ENCODE measurements at regions of chr1 and their contacts with region 1.

Region 1: DNA sequence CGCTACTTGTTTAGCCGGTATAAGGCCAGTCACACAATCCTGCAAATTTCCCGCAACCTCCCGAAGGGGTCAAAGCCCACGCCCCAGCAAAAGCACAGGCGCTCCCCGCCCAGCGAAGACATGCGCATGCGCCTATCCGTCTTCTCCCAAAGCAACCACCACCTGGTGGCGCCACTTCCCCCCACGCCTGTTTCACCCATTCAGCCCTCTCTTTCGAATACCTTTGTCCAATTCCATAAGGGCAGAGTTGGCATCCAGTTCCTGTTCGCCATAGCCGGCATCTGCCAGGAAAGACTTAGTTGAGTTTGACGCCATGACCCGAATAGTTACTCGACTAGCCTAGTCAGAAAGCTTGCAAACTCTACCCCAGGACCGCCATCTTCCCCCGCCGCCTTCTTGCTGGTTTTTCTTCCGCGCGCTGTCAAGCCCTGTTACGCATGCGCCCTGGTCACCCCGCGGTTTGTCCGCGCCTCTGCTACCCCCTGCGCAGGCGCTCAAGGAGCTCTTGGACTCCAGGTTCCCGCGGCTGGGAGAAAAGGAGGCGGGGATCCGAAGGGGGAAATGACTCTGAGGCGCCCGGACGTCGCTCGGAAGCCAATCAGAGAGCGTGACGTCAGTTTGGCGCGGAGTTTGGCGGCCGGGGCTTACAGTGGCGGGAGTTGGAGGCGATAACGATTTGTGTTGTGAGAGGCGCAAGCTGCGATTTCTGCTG is at the starts of genes DTL and INTS7:
- DNase-seq: peak; percentile 97
- ATAC-seq: peak; percentile 92
- H3K4me3 Mint-ChIP-seq: peak within 1 kb of the TSS; percentile 90
- H3K27ac Mint-ChIP-seq: peak within 1 kb of the TSS; percentile 93
- H3K4me1 Mint-ChIP-seq: peaks cover 52% of the 10 kb centered on the region
- H3K27me3 Mint-ChIP-seq: no peaks in the 10 kb centered on the region
- total RNA-seq, gene DTL: 49.7 to 54.7 TPM
- total RNA-seq, gene INTS7: 22.6 to 23.0 TPM

Region 2: GRCh38 chr1:211675230-211676105 is 359.8 kb before region 1 on chr1 and contains the start of gene NEK2:
- POLR2A ChIA-PET with region 1: interaction called, 19 read pairs
- DNase-seq: peak; percentile 85
- ATAC-seq: peak; percentile 97
- H3K4me3 Mint-ChIP-seq: peak within 1 kb of the TSS; percentile 92
- H3K27ac Mint-ChIP-seq: peak within 1 kb of the TSS; percentile 78
- H3K4me1 Mint-ChIP-seq: peaks cover 24% of the 10 kb centered on the region
- H3K27me3 Mint-ChIP-seq: peaks cover 3% of the 10 kb centered on the region
- total RNA-seq, gene NEK2: 31.8 to 32.7 TPM

Region 3: GRCh38 chr1:211680752-211681327 is 354.4 kb before region 1 on chr1:
- POLR2A ChIA-PET with region 1: interaction called, 19 read pairs
- DNase-seq: peak; percentile 60
- ATAC-seq: peak; percentile 90
- H3K4me3 Mint-ChIP-seq: no peak overlapping the region
- H3K27ac Mint-ChIP-seq: peak overlapping the region; percentile 33
- H3K4me1 Mint-ChIP-seq: peaks cover 9% of the 10 kb centered on the region
- H3K27me3 Mint-ChIP-seq: peaks cover 3% of the 10 kb centered on the region

Region 4: GRCh38 chr1:212002536-212002935 is 32.7 kb before region 1 on chr1:
- POLR2A ChIA-PET with region 1: no interaction called
- DNase-seq: no peak
- ATAC-seq: no peak
- H3K4me3 Mint-ChIP-seq: no peak overlapping the region
- H3K27ac Mint-ChIP-seq: no peak overlapping the region
- H3K4me1 Mint-ChIP-seq: peaks cover 2% of the 10 kb centered on the region
- H3K27me3 Mint-ChIP-seq: no peaks in the 10 kb centered on the region

Measured in activated naive CD8-positive, alpha-beta T cell treated with anti-CD3 and anti-CD28 coated beads, Interleukin-2, amount 10 ng/mL, durations not matched to agents 7 days and 5 days (primary cell).